ENCODE measurements at regions of chr4 and their contacts with region 1.

Region 1: GRCh38 chr4:74311696-74312313 is 3.5 kb downstream of the EPGN start:
- DNase-seq: no peak
- H3K4me3 ChIP-seq: no peak overlapping the region
- H3K27ac ChIP-seq: no peak overlapping the region
- H3K4me1 ChIP-seq: peaks cover 0 to 13% (median 7%) of the 10 kb centered on the region in 6 donors
- H3K27me3 ChIP-seq: no peaks in the 10 kb centered on the region
- CTCF ChIP-seq: peak in 9 of 11 experiments; percentile 18 to 72 (median 51)
- POLR2A ChIP-seq: no peak

Region 2: DNA sequence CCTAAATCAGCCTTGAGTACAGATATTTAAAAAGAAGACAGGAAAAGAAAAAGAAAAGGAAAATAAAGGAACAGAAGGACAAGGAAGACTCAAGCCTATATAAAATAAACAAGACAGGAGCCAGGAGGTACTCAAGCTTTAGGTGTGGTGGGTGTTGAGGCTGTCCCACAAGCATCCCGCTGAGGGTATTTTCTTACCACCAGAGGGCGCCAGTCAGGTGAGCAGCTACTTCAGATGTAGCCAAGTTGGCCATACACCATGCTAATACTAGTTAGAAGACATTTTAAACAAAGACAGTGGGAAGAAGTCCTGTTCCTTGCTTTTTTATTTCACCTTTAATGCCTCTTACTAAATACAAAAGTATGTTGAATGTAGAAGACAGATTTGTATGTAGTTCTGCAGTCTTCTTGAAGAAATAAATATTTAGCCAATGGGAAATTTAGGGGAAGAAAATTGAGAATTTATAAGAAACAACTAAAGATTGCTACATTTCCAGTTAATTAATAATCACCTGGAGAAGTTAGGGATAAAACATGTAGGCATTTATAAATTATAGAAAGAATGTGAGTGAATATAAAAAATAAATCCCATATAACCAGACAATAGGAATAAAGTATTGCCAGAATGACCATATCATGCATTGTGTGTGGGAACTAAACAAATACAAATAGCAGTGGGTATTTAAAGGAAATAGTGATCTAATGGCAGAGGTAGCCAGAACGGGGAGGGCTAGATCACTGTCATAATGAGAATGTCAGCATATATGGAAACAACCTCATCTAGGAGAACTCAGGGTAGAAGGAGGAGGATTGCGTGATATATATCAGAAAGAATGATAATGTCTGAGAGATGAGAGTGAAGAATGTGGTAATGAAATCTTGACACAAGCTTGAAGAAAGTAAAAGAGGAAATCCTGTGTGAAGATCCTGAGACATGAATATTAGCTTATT is 82.8 kb before region 1 on chr4:
- intact Hi-C with region 1: loop called (anchors 5 kb)
- DNase-seq: peak; percentile 88
- H3K4me3 ChIP-seq: no peak overlapping the region
- H3K27ac ChIP-seq: no peak overlapping the region
- H3K4me1 ChIP-seq: peaks cover 0 to 18% (median 2%) of the 10 kb centered on the region in 6 donors
- H3K27me3 ChIP-seq: no peaks in the 10 kb centered on the region
- CTCF ChIP-seq: peak; percentile 37 to 88 (median 77)
- POLR2A ChIP-seq: no peak